Activated CD4-positive, alpha-beta T cell treated with anti-CD3 and anti-CD28 coated beads, Interleukin-2, amount 10 ng/mL, durations not matched to agents 7 days and 5 days (primary cell): ENCODE measurements at regions of chr17 and their contacts with region 1.

Region 1: DNA sequence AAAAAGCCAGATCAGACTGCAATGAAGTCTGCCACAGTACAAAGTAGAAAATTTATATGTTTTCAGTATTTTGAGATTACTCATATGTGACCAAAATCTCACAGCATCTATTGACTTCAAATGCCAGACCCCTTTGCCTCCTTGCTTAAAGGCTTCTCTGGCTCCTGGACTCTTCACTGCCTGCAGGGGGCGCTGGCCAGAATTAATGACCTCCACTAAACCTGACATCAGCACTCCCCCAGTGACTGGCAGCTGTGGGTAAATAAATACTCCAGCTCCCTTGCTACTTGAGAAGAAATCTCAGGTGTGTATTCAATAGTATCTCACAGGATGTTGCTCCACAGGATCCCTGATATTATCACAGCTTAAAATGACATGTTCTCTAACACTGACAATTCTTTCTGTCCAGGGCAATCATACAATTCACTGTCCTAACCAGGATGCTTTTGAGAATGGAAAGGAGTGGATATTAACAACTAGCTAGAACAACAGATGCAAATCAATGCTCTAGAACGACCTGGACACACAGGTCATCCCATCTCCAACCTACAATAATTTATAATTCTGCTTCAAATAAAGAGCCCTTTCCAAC is 4.0 kb downstream of the BECN1 start:
- DNase-seq: peak; percentile 73
- H3K4me3 Mint-ChIP-seq: no peak overlapping the region
- H3K27ac Mint-ChIP-seq: no peak overlapping the region
- H3K4me1 Mint-ChIP-seq: peaks cover 36% of the 10 kb centered on the region
- H3K27me3 Mint-ChIP-seq: no peaks in the 10 kb centered on the region

Region 2: DNA sequence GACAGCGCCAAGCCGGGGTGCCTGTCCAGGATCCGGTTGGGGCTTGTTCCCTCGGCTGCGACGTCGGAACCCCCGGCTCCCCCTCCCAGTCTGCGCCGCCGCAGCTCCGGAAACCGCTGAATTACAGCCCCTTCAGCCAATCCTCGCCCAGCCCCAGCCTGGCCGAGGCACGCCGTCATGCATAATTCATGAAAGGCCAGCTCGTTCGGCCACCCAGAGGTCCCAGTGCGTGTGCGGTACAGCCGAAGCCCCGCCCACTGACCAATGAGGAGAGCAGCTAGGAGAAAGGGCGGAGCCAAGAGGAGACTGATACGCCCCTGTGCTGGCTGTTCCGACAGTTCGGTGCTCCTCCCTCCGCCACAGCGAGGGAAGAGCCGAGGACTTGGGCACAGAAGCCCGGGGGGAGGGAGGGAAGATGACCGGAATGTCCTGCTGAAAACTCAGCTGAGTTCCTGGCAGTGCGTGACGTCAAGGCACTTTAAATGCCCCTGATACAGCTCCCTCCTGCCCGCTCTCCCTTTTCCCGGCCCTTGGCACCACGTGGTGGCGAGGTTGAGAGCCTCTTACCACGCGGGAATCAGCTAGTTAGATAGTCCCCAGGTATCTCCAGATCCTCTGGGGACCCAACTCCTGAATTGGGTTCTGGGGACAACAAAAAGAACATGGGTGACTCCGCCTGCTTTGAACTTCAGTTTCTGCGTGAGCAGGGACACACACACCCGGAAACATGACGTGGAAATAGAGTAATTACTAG is 431.5 kb before region 1 on chr17 and contains the start of gene STAT3:
- CTCF ChIA-PET with region 1: no interaction called
- POLR2A ChIA-PET with region 1: no interaction called
- DNase-seq: peak; percentile 100
- H3K4me3 Mint-ChIP-seq: peak within 1 kb of the TSS; percentile 97
- H3K27ac Mint-ChIP-seq: peak within 1 kb of the TSS; percentile 100
- H3K4me1 Mint-ChIP-seq: peaks cover 52% of the 10 kb centered on the region
- H3K27me3 Mint-ChIP-seq: no peaks in the 10 kb centered on the region
- total RNA-seq, gene STAT3: 114 to 121 TPM

Region 3: GRCh38 chr17:42673885-42674754 is 145.9 kb before region 1 on chr17:
- CTCF ChIA-PET with region 1: no interaction called
- POLR2A ChIA-PET with region 1: no interaction called
- DNase-seq: no peak
- H3K4me3 Mint-ChIP-seq: no peak overlapping the region
- H3K27ac Mint-ChIP-seq: no peak overlapping the region
- H3K4me1 Mint-ChIP-seq: peaks cover 44% of the 10 kb centered on the region
- H3K27me3 Mint-ChIP-seq: peaks cover 55% of the 10 kb centered on the region

Region 4: GRCh38 chr17:42698736-42699414 is 121.2 kb before region 1 on chr17:
- CTCF ChIA-PET with region 1: no interaction called
- POLR2A ChIA-PET with region 1: no interaction called
- DNase-seq: no peak
- H3K4me3 Mint-ChIP-seq: no peak overlapping the region
- H3K27ac Mint-ChIP-seq: no peak overlapping the region
- H3K4me1 Mint-ChIP-seq: no peaks in the 10 kb centered on the region
- H3K27me3 Mint-ChIP-seq: peaks cover 2% of the 10 kb centered on the region

Region 5: DNA sequence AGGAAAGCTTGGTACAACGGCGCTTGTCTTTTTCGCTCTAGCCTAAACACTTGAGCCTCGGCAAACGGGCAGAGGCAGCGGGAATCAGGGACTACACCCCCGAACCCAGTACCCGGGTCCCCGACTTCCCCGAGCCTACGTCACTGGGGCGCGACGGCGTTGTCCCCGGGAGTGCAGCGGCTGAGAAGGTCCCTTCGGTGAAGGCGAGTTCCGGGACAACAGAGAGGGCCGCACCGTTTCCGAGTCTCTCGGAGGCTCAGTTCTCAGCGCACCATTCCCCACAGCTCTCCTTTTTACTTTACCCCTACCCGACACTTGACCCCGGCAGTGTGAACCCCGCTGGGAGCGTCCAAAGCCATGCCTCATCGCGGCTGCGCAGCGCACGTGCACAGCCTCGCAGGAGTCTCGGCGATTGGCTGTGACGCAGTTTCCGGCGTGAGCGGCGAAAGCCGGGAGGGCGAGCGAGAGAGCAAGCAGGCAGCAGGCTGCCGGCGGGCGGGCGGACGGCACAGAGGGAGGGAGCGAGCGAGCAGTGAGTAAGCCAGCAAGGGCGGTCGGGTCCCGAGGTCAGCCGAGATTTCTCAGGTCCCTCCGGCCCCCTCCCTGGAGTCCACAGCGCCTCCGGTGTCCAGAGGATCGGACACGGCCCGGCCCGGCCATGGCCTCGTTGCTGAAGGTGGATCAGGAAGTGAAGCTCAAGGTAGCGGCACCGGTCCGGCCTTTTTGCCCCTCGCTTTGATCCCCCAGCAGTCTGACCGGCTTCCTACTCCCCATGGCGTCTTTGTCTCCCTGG is 13.1 kb after region 1 on chr17 and contains the start of gene PSME3:
- CTCF ChIA-PET with region 1: interaction called, 29 read pairs
- POLR2A ChIA-PET with region 1: no interaction called
- DNase-seq: peak; percentile 92
- H3K4me3 Mint-ChIP-seq: peak within 1 kb of the TSS; percentile 94
- H3K27ac Mint-ChIP-seq: peak within 1 kb of the TSS; percentile 99
- H3K4me1 Mint-ChIP-seq: peaks cover 24% of the 10 kb centered on the region
- H3K27me3 Mint-ChIP-seq: peaks cover 2% of the 10 kb centered on the region
- total RNA-seq, gene PSME3: 110 to 111 TPM

Region 6: DNA sequence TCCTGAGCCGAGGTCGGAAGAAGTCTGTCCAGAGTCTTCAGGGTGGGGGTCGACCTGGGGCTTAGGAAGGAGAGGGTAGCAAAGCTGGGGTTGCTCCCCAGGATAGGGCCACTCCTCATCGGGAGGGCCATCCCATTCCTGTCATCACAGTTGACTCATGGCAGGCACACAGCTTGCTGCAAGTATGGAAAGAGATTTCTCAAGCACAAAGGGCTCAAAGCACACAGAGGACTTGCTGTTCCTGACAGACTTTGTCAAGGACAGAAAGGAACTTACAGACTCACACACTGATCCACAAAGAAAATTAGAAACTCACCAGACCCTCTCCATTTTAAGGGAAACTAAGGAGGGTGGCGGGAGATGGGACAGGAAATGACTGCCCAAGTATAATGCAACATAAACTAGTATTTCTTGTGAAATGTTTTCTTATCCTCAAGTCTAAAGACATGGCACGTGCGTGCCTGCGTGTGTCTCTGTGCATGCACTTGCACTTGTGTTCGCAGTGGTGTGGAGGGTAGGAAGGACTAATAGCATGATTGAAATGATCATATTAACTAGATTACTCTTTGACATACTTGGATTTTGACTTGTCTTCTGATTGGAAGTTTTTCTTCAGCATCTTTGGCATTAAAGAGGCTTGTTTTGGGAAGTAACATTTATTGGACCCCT is 26.7 kb after region 1 on chr17:
- CTCF ChIA-PET with region 1: interaction called, 14 read pairs
- POLR2A ChIA-PET with region 1: no interaction called
- DNase-seq: no peak
- H3K4me3 Mint-ChIP-seq: no peak overlapping the region
- H3K27ac Mint-ChIP-seq: no peak overlapping the region
- H3K4me1 Mint-ChIP-seq: peaks cover 8% of the 10 kb centered on the region
- H3K27me3 Mint-ChIP-seq: no peaks in the 10 kb centered on the region

Region 7: DNA sequence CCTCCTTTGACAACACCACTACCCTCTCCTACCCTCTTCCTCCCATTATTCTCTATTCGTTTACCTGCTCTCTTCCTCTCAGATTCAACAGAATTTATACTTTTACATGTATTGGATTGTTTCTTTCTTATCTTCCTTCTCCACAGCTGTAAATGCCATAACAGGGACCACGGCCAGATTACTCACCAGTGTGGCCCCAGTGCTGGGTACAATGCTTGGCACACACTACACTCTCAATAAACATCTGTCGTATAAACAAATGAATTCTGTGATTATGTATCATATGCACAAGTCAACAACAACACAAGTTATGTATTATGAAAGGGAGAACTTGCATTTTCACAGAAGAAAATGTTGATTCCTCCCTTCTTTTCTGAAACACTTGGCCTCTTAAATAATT is 124.2 kb after region 1 on chr17:
- CTCF ChIA-PET with region 1: no interaction called
- POLR2A ChIA-PET with region 1: no interaction called
- DNase-seq: no peak
- H3K4me3 Mint-ChIP-seq: no peak overlapping the region
- H3K27ac Mint-ChIP-seq: no peak overlapping the region
- H3K4me1 Mint-ChIP-seq: no peaks in the 10 kb centered on the region
- H3K27me3 Mint-ChIP-seq: peaks cover 6% of the 10 kb centered on the region